ENCODE measurements at regions of chr13 and their contacts with region 1.

Region 1: DNA sequence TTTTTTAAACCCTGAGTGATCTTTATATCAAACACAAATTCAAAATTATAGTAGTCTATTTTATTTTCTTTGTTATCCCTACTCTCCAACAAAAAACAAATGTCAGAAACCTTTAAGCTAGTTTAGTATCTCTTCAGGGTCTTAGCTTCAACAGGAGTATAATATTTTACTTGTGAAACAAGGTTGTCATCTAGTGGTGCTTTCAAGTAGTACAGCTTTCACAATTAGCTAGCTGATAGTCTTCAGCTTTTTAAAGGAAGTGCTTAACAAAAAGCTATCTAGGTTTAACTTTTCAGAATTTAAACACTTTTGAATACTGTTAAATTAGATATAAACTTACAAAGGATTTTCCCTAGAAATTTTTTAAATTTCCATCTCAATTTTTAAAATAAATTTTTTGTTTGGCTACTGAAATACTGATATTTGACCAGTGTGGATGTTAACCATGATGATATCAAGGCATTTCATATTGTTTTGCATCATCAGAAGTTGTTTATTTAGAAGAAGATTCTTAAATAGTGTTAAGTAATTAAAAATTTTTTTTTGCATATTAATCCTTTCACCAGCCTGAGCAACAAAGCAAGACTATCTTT is 34.2 kb downstream of the TDRD3 start:
- DNase-seq: peak in 1 of 2 experiments; percentile 58
- H3K4me3 ChIP-seq: no peak overlapping the region
- H3K4me3 Mint-ChIP-seq: no peak overlapping the region
- H3K27ac Mint-ChIP-seq: no peak overlapping the region
- H3K4me1 ChIP-seq: no peaks in the 10 kb centered on the region
- H3K4me1 Mint-ChIP-seq: no peaks in the 10 kb centered on the region
- H3K27me3 ChIP-seq: no peaks in the 10 kb centered on the region
- H3K27me3 Mint-ChIP-seq: no peaks in the 10 kb centered on the region
- CTCF ChIP-seq: peak; percentile 85 to 86

Region 2: GRCh38 chr13:59906413-59907049 is 524.7 kb before region 1 on chr13:
- CTCF ChIA-PET with region 1: no interaction called
- POLR2A ChIA-PET with region 1: no interaction called
- intact Hi-C with region 1: loop called (anchors 10 kb)
- DNase-seq: peak in 1 of 2 experiments; percentile 30
- H3K4me3 ChIP-seq: no peak overlapping the region
- H3K4me3 Mint-ChIP-seq: no peak overlapping the region
- H3K27ac Mint-ChIP-seq: no peak overlapping the region
- H3K4me1 ChIP-seq: peaks cover 11% of the 10 kb centered on the region; the same call in 1 of the 2 replicates
- H3K4me1 Mint-ChIP-seq: peaks cover 7% of the 10 kb centered on the region
- H3K27me3 ChIP-seq: no peaks in the 10 kb centered on the region
- H3K27me3 Mint-ChIP-seq: no peaks in the 10 kb centered on the region
- CTCF ChIP-seq: peak; percentile 66 to 67

Region 3: DNA sequence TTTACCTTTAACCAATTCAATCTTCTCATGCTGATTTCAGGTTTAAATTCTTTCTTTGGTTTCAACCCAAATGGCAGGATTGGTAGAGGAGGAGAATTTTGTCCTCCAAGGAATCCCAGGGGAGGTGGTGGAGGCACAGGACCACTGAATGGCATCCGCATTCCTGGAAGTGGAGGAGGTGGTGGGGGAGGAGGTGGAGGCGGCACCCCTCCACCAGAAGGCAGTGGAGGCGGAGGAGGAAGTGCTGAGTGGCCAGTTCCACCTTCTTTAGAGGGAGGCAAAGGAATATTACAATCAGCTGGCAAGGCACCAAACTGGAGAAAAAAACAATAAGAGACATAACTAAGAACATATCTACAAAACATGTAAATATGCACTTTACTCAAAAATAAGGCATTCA is 460.4 kb before region 1 on chr13:
- CTCF ChIA-PET with region 1: no interaction called
- POLR2A ChIA-PET with region 1: no interaction called
- intact Hi-C with region 1: loop called (anchors 5 kb)
- DNase-seq: no peak
- H3K4me3 ChIP-seq: no peak overlapping the region
- H3K4me3 Mint-ChIP-seq: no peak overlapping the region
- H3K27ac Mint-ChIP-seq: no peak overlapping the region
- H3K4me1 ChIP-seq: peaks cover 26% of the 10 kb centered on the region
- H3K4me1 Mint-ChIP-seq: peaks cover 9% of the 10 kb centered on the region
- H3K27me3 ChIP-seq: no peaks in the 10 kb centered on the region
- H3K27me3 Mint-ChIP-seq: no peaks in the 10 kb centered on the region
- CTCF ChIP-seq: no peak

Region 4: DNA sequence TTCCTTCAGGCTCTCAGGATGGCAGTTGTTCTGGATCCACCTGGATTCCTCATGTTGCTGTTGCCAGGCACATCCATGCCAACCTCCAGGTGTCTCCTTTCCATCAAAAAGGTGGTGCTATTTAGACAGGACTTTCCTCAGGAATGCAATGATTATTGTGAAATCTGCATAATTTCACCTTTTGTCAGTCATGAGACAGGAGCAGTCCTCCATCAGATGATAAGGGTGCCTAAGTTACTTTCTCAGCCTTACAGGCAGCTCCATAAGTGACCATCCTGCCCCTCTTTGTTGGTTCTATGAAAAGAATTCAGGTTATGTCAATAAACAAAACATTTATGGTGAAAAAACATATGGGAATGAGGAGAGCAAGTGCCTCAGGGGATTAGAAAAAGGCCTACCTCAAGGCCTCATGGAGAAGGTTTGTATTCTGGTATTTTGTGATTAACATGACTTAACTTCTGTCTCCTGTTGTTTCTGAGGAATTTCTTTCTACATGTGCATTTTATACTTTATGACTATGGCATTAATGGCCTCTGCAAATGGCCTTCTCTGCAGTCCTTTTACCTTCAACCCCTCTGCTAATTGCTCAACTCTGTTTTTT is 157.2 kb before region 1 on chr13:
- CTCF ChIA-PET with region 1: no interaction called
- POLR2A ChIA-PET with region 1: no interaction called
- intact Hi-C with region 1: loop called (anchors 5 kb)
- DNase-seq: peak; percentile 72 to 79
- H3K4me3 ChIP-seq: no peak overlapping the region
- H3K4me3 Mint-ChIP-seq: peak overlapping the region; percentile 31
- H3K27ac Mint-ChIP-seq: peak overlapping the region; percentile 92
- H3K4me1 ChIP-seq: peaks cover 53% of the 10 kb centered on the region
- H3K4me1 Mint-ChIP-seq: peaks cover 33% of the 10 kb centered on the region
- H3K27me3 ChIP-seq: no peaks in the 10 kb centered on the region
- H3K27me3 Mint-ChIP-seq: no peaks in the 10 kb centered on the region
- CTCF ChIP-seq: no peak

Region 5: GRCh38 chr13:60335531-60335930 is 95.7 kb before region 1 on chr13:
- CTCF ChIA-PET with region 1: interaction called, 7 read pairs
- POLR2A ChIA-PET with region 1: no interaction called
- intact Hi-C with region 1: loop called (anchors 1 kb)
- DNase-seq: no peak
- H3K4me3 ChIP-seq: no peak overlapping the region
- H3K4me3 Mint-ChIP-seq: no peak overlapping the region
- H3K27ac Mint-ChIP-seq: no peak overlapping the region
- H3K4me1 ChIP-seq: no peaks in the 10 kb centered on the region
- H3K4me1 Mint-ChIP-seq: no peaks in the 10 kb centered on the region
- H3K27me3 ChIP-seq: no peaks in the 10 kb centered on the region
- H3K27me3 Mint-ChIP-seq: peaks cover 4% of the 10 kb centered on the region
- CTCF ChIP-seq: peak; percentile 58 to 73

Region 6: DNA sequence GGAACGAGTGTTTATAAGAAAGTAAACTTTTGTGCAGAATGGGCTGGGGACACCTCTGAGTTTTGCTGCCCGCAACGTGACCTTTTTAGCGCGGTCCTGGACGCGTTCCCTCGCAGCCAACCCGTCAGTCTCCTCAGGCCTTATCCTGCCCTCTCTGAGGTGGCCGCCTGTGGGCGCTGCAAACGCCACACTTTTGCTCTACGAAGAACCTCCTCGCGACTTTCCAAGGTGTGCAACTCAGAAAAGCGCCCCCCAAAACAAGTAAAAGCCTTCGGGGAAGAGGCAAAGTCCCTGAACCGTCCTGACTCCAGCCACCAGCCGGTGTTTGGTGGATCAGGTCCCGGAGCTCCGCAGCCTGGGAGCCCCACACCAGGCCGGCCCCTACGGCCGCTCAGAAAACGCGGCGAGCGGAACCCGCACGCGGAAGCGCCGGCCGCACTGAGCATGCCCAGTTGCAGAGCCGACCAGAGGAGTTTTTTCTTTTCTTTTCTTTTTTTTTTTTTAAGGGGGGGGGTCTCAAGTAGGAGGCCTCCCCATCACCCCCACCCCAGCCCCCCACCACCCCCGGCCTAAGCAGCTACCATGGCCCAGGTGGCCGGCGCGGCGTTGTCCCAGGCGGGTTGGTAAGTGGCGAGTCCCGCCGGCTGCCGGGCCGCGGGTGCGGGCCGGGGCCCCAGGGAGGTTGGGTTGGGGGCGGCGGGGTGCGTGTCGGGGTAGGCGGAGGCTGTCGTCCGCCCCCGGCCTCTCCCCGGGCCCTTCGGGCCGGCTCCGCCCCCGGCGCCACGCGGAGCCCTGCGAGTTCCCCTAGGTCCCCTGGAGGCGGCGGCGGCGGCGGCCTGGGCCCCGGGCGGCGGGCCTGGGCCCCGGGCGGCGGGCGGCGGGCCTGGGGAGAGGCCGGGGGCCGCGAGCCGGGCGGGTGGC is 34.2 kb before region 1 on chr13 and contains the start of gene TDRD3:
- CTCF ChIA-PET with region 1: interaction called, 11 read pairs
- POLR2A ChIA-PET with region 1: no interaction called
- intact Hi-C with region 1: loop called (anchors 1 kb)
- DNase-seq: peak; percentile 90 to 91
- H3K4me3 ChIP-seq: peak within 1 kb of the TSS; percentile 58
- H3K4me3 Mint-ChIP-seq: peak within 1 kb of the TSS; percentile 91
- H3K27ac Mint-ChIP-seq: peak within 1 kb of the TSS; percentile 85
- H3K4me1 ChIP-seq: peaks cover 25% of the 10 kb centered on the region
- H3K4me1 Mint-ChIP-seq: peaks cover 43% of the 10 kb centered on the region
- H3K27me3 ChIP-seq: no peaks in the 10 kb centered on the region
- H3K27me3 Mint-ChIP-seq: no peaks in the 10 kb centered on the region
- CTCF ChIP-seq: peak; percentile 83 to 94
- total RNA-seq, gene TDRD3: 16.3 and 17.2 TPM in 2 replicates

Region 7: DNA sequence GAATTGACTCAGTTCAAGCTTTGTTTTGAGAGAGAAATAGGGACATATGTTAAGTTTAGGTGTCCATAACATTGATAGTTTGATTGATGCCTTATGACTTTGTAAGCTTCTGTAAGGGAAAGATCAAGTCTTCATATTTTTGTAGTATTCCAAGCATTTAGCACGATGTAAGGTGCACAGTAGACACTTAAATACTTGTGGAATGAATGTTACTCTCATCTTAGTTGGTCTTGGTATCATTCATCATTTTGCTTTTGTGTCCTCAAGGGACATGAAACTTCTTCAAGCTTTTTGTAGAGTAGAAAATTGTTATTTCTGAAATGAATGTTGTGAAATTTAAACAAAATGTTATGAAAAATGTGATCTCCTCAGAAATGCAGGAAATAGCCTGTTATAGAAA is 24.1 kb before region 1 on chr13:
- CTCF ChIA-PET with region 1: no interaction called
- POLR2A ChIA-PET with region 1: no interaction called
- intact Hi-C with region 1: no loop called
- DNase-seq: no peak
- H3K4me3 ChIP-seq: no peak overlapping the region
- H3K4me3 Mint-ChIP-seq: no peak overlapping the region
- H3K27ac Mint-ChIP-seq: no peak overlapping the region
- H3K4me1 ChIP-seq: peaks cover 9% of the 10 kb centered on the region
- H3K4me1 Mint-ChIP-seq: peaks cover 9% of the 10 kb centered on the region
- H3K27me3 ChIP-seq: no peaks in the 10 kb centered on the region
- H3K27me3 Mint-ChIP-seq: no peaks in the 10 kb centered on the region
- CTCF ChIP-seq: no peak

Region 8: DNA sequence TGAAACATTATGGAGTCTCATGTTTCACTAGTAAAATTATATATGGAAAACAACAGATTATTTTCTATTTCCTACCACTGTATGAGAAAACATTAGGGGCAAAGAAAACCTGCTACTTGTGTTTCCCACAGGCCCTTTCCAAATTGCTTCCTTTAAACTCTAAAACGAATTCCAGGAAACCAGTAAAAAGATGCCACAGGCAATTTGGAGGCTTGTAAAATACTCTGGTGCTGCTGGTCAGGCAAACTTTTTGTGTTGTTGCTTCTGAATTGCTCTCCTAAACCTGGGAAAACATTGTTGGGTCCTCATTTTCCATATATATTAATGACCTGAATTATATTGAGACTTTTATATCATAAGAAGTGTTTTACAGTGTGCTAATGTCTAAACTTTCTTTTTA is 107.4 kb after region 1 on chr13:
- CTCF ChIA-PET with region 1: no interaction called
- POLR2A ChIA-PET with region 1: no interaction called
- intact Hi-C with region 1: no loop called
- DNase-seq: no peak
- H3K4me3 ChIP-seq: no peak overlapping the region
- H3K4me3 Mint-ChIP-seq: no peak overlapping the region
- H3K27ac Mint-ChIP-seq: no peak overlapping the region
- H3K4me1 ChIP-seq: no peaks in the 10 kb centered on the region
- H3K4me1 Mint-ChIP-seq: no peaks in the 10 kb centered on the region
- H3K27me3 ChIP-seq: no peaks in the 10 kb centered on the region
- H3K27me3 Mint-ChIP-seq: no peaks in the 10 kb centered on the region
- CTCF ChIP-seq: no peak